PC-3 (cell line): ENCODE measurements at regions of chr2 and their contacts with region 1.

Region 1: GRCh38 chr2:158539176-158540005 is 82.6 kb downstream of the PKP4 start:
- DNase-seq: peak; percentile 96
- ATAC-seq: peak; percentile 89
- H3K4me3 ChIP-seq: no peak overlapping the region
- H3K27ac ChIP-seq: peak overlapping the region; percentile 49
- H3K4me1 ChIP-seq: peaks cover 17% of the 10 kb centered on the region
- H3K27me3 ChIP-seq: no peaks in the 10 kb centered on the region
- CTCF ChIP-seq: no peak

Region 2: DNA sequence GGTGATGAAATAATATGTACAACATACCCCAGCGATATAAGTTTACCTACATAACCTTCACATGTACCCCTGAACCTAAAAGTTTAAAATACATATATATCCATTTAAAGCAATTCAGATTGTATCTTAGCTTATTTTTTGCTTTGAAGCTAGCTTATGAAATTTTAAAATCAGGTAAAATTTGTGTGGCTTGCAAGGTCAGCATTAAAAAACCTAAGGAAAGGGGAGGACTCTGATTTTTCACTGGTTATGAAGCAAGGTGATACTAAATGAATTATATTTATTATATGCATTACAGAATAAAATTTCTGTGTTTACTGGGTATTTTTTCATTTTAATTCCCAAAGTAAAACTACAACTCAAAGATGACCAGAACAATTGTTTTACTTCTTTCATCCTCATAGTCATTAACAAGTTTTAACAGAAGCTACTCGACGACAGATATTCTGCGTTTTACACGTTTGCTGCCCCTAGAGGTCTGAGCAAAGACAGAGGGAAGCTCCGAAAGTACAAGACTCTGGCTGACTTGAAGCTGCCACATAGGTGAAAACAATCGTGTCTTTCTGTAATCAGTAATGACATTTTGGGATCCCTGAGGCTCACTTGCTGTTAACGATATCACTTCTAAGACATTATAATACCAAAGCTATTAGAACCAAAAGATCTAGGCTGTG is 65.5 kb before region 1 on chr2:
- CTCF ChIA-PET with region 1: no interaction called
- POLR2A ChIA-PET with region 1: no interaction called
- intact Hi-C with region 1: no loop called
- DNase-seq: no peak
- ATAC-seq: no peak
- H3K4me3 ChIP-seq: no peak overlapping the region
- H3K27ac ChIP-seq: no peak overlapping the region
- H3K4me1 ChIP-seq: no peaks in the 10 kb centered on the region
- H3K27me3 ChIP-seq: no peaks in the 10 kb centered on the region
- CTCF ChIP-seq: peak; percentile 29; the same call in 1 of the 2 replicates

Region 3: GRCh38 chr2:158509928-158510797 is 29.2 kb before region 1 on chr2:
- CTCF ChIA-PET with region 1: no interaction called
- POLR2A ChIA-PET with region 1: no interaction called
- intact Hi-C with region 1: no loop called
- DNase-seq: peak; percentile 57
- ATAC-seq: peak; percentile 73
- H3K4me3 ChIP-seq: no peak overlapping the region
- H3K27ac ChIP-seq: no peak overlapping the region
- H3K4me1 ChIP-seq: peaks cover 11% of the 10 kb centered on the region; the same call in 1 of the 2 replicates
- H3K27me3 ChIP-seq: no peaks in the 10 kb centered on the region
- CTCF ChIP-seq: no peak

Region 4: GRCh38 chr2:158723917-158724690 is 184.7 kb after region 1 on chr2:
- CTCF ChIA-PET with region 1: no interaction called
- POLR2A ChIA-PET with region 1: no interaction called
- intact Hi-C with region 1: loop called (anchors 1 kb)
- DNase-seq: peak; percentile 94
- ATAC-seq: peak; percentile 77
- H3K4me3 ChIP-seq: peak overlapping the region; percentile 61
- H3K27ac ChIP-seq: peak overlapping the region; percentile 98
- H3K4me1 ChIP-seq: peaks cover 40% of the 10 kb centered on the region
- H3K27me3 ChIP-seq: no peaks in the 10 kb centered on the region
- CTCF ChIP-seq: peak; percentile 78